ENCODE measurements at regions of chr3 and their contacts with region 1.

Region 1: GRCh38 chr3:17831366-17831765 is 88.9 kb upstream of the TBC1D5 start:
- DNase-seq: no peak
- ATAC-seq: no peak

Region 2: GRCh38 chr3:17645072-17645698 is 186.2 kb before region 1 on chr3:
- intact Hi-C with region 1: loop called in 1 of 2 experiments (anchors 10 kb)
- DNase-seq: no peak
- ATAC-seq: peak; percentile 49 to 71

Measured in left cardiac atrium (tissue), 4 donors.